Panc1 (cell line): ENCODE measurements at regions of chr5 and their contacts with region 1.

Region 1: DNA sequence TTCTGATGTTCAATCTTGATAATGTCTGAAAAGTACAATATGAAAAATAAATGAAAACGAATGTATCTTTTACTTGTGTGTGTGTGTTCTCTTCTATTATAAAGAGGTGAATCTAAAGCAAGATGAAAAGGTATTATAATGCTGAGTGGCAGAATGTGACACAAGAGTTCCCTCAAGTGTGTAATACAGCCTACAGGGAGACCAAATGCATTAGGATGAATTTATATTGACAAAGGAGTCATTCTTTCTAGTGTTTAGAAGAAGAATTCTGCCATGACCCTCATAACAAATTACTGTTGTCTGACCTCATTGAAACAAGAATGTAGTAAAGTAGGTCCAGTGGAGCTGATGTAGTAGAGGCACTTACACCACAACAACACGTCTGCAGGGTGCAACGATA is 1119.0 kb upstream of the CDH10 start:
- DNase-seq: no peak
- ATAC-seq: no peak
- H3K4me3 ChIP-seq: no peak overlapping the region
- H3K27ac ChIP-seq: no peak overlapping the region
- H3K4me1 ChIP-seq: no peaks in the 10 kb centered on the region
- H3K27me3 ChIP-seq: no peaks in the 10 kb centered on the region
- CTCF ChIP-seq: no peak

Region 2: DNA sequence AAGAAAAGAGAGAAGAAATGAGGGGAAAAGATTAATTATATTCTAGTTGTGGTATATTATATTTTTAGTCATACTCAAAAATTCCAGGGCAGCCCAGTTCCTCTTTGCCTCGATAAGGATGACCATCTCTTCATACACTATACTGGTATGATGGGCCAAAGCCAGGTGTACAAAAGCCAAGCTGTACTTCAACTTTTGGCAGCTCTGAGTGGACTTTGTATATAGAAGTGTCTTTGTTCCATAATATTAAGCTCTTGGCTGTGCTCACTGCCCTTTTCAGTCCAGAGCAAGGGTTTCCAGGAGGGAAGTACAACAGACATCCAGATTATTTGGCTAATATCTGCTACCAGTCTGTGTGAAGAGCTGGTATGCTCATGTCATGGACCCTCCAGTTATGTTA is 184.7 kb before region 1 on chr5:
- CTCF ChIA-PET with region 1: no interaction called
- POLR2A ChIA-PET with region 1: no interaction called
- in situ Hi-C with region 1: no loop called
- intact Hi-C with region 1: no loop called
- DNase-seq: no peak
- ATAC-seq: no peak
- H3K4me3 ChIP-seq: no peak overlapping the region
- H3K27ac ChIP-seq: no peak overlapping the region
- H3K4me1 ChIP-seq: no peaks in the 10 kb centered on the region
- H3K27me3 ChIP-seq: no peaks in the 10 kb centered on the region
- CTCF ChIP-seq: no peak

Region 3: GRCh38 chr5:25944786-25945185 is 181.0 kb after region 1 on chr5:
- CTCF ChIA-PET with region 1: no interaction called
- POLR2A ChIA-PET with region 1: no interaction called
- in situ Hi-C with region 1: no loop called
- intact Hi-C with region 1: no loop called
- DNase-seq: no peak
- ATAC-seq: no peak
- H3K4me3 ChIP-seq: no peak overlapping the region
- H3K27ac ChIP-seq: no peak overlapping the region
- H3K4me1 ChIP-seq: no peaks in the 10 kb centered on the region
- H3K27me3 ChIP-seq: no peaks in the 10 kb centered on the region
- CTCF ChIP-seq: no peak

Region 4: GRCh38 chr5:26181582-26181981 is 417.8 kb after region 1 on chr5:
- CTCF ChIA-PET with region 1: no interaction called
- POLR2A ChIA-PET with region 1: no interaction called
- in situ Hi-C with region 1: no loop called
- intact Hi-C with region 1: no loop called
- DNase-seq: no peak
- ATAC-seq: no peak
- H3K4me3 ChIP-seq: no peak overlapping the region
- H3K27ac ChIP-seq: no peak overlapping the region
- H3K4me1 ChIP-seq: no peaks in the 10 kb centered on the region
- H3K27me3 ChIP-seq: no peaks in the 10 kb centered on the region
- CTCF ChIP-seq: no peak

Region 5: GRCh38 chr5:26310385-26310784 is 546.6 kb after region 1 on chr5:
- CTCF ChIA-PET with region 1: no interaction called
- POLR2A ChIA-PET with region 1: no interaction called
- in situ Hi-C with region 1: no loop called
- intact Hi-C with region 1: loop called (anchors 10 kb)
- DNase-seq: no peak
- ATAC-seq: no peak
- H3K4me3 ChIP-seq: no peak overlapping the region
- H3K27ac ChIP-seq: no peak overlapping the region
- H3K4me1 ChIP-seq: no peaks in the 10 kb centered on the region
- H3K27me3 ChIP-seq: no peaks in the 10 kb centered on the region
- CTCF ChIP-seq: no peak